ENCODE measurements at regions of chr19 and their contacts with region 1.

Region 1: DNA sequence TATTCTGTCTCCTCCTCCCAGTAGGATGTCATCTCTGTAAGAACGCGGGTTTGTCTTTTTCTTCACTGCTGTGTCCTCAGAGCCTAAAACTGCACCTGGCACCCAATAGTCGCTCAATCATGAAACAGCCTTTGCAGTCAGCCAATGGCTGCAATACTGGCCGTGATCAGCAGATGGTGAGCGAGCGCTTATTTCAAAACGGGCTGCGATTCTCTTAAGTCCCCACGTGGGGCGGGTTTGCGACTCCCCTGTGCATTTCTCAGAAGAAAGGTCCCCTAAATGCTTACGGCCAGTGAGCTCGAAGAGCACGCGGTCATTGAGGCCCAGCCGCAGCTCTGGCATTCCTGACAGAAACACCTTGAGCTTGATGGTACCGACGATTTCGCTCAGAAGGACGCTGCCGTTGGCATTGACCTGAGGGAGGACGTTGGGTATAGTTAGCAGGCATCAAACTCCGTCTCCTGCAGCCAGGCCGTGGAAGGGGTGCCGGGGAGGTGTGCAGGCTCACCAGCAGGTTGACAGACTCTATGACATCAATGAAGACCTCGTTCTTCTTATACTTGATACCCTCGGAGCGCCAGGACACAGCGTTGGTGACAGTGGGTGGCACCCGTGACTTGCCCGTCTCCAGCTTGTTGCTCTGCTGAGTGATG is 6.0 kb downstream of the AP1M2 start:
- DNase-seq: peak; percentile 93
- H3K4me3 Mint-ChIP-seq: no peak overlapping the region
- H3K27ac Mint-ChIP-seq: no peak overlapping the region
- H3K4me1 Mint-ChIP-seq: peaks cover 21% of the 10 kb centered on the region
- H3K27me3 Mint-ChIP-seq: peaks cover 1% of the 10 kb centered on the region

Region 2: DNA sequence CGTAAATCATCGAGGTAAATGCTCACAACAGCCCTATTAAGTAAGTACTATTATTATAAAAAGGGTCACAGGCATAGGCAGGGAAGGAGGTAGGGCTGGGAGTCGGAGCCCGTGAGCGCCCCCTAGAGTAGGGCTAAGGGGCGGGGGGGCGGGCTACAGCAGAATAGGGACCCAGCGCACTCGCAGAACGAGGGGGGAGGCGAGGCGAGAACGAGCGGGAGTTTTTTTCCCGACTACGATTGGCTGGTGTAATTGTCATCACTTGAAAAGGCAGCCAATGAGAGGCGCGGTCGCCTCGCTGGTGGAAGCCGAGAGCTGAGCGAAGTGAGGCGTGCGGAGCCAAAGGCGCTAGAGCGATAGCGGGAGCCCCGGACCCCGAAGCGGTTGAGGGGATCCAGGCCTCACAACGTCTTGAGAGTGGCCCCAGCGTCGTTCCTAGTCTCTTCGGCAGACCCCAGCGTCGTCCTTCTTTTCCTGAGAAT is 102.2 kb before region 1 on chr19:
- CTCF ChIA-PET with region 1: interaction called, 11 read pairs
- POLR2A ChIA-PET with region 1: no interaction called
- DNase-seq: peak; percentile 88
- H3K4me3 Mint-ChIP-seq: no peak overlapping the region
- H3K27ac Mint-ChIP-seq: no peak overlapping the region
- H3K4me1 Mint-ChIP-seq: peaks cover 24% of the 10 kb centered on the region
- H3K27me3 Mint-ChIP-seq: no peaks in the 10 kb centered on the region

Region 3: DNA sequence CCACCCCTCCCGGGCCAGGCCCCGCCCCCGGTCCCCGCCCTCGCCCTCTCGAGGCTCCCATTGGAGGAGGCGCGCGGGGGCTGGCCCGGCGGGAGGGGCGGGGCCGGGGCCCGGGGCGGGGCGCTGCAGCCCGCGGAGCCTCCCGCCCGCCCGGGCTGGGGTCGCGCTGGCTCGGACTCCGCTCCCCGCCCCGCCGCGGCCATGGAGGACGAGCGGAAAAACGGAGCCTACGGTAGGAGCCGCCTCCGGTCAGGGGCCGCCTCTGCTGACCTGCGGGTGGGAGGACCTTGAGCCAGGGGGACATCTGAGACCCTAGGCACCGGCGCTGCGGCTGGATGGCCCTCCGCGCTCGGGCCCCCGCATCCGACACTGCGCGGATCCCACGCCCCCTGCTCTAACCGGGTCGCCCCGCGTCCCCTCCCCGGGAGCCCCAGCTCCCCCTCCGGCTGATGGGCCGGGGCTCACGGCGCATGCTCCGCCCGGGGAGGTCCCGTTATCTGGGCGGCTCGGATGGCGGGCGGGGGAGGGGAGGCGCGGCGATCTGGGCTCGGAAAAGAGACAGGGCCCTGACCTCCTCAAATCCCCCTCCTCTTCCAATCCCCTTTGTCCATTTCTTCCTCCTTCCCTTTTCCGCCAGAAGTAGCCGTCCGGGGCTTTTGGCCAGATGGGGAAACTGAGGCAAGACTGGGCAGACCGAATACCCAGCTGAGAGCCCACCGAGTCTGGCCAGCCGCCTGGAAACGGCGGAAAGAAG is 21.4 kb after region 1 on chr19:
- CTCF ChIA-PET with region 1: interaction called, 39 read pairs
- POLR2A ChIA-PET with region 1: interaction called, 20 read pairs
- DNase-seq: peak; percentile 91
- H3K4me3 Mint-ChIP-seq: peak overlapping the region; percentile 95
- H3K27ac Mint-ChIP-seq: peak overlapping the region; percentile 99
- H3K4me1 Mint-ChIP-seq: peaks cover 25% of the 10 kb centered on the region
- H3K27me3 Mint-ChIP-seq: peaks cover 3% of the 10 kb centered on the region

Region 4: DNA sequence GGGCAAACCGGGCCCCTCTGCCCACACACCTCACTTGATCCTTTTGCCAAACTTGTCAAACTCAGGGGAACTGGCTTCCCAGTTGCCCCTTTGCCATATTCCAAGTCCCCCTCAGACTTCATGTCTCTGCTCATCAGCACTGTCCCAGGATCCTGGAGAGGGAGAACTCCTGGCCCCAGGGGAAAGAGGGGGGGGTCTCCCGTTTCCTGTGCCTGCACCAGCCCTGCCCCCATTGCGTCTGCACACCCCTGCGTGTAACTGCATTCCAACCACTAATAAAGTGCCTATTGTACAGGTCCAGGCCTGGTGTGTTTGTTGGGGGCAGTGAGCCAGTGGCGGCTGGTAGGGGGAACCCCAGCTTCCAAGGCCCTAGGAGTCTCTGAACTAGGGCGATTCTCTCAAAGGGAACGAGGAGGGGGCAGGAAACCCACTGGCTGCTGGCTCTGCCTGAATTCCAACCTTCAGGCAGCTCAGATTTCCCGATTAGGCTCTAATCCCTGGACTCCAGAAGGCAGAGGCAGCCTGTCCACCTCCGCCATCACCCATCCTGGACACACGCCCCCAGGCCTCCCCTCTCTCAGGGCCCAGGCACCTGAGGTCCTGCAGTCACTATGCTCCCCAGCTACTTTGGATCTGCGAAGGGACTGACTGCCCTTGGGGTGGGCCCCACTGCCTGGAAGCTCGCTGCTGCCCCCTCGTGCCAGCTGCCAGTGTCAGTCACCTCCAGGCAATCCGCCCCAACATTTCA is 63.3 kb after region 1 on chr19:
- CTCF ChIA-PET with region 1: interaction called, 230 read pairs
- POLR2A ChIA-PET with region 1: interaction called, 16 read pairs
- DNase-seq: peak; percentile 83
- H3K4me3 Mint-ChIP-seq: no peak overlapping the region
- H3K27ac Mint-ChIP-seq: no peak overlapping the region
- H3K4me1 Mint-ChIP-seq: peaks cover 3% of the 10 kb centered on the region
- H3K27me3 Mint-ChIP-seq: no peaks in the 10 kb centered on the region

Region 5: DNA sequence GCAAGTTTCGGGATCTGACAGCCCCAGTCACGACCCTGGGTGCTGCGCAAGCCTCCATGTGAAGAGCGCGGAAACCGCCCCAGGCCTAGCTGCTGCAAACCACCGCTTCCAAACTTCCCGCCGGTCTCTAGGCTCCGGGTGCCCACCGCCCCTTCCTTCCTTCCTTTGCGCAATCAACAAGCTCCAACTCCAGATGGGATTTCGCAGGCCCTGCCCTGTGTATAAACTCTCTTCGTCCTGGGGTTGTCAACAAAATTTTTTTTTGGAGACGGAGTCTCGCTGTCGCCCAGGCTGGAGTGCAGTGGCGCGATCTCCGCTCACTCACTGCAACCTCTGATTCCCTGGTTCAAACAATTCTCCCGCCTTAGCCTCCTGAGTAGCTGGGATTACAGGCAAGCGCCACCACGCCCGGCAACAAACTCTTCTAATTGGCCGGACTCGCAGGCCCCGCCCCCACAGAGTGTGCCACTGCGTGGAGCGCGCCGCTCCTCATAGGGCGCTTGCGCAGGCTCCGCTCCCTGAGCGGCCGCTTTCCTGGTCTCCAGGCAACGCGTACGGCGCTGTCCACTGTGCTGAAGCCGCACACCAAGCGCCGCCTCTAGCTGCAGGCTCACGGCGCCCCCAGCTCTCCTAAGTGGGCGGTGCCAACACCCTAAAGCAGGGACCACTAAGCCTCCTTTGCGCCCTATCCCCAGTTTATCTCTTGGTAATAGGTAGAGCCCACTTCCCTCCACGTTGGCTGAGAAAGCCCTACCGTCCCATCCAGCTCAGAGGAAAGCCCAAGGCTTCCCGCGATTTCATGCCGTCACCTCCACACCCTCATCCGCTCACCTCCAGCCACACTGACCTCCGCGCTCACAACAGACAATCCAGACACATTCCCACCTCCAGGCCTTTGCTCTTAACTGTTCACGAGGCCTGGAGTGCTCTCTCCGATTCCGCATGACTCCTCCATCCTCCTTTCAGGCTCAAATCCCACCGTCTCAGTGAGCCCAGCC is 114.6 kb after region 1 on chr19:
- CTCF ChIA-PET with region 1: interaction called, 137 read pairs
- POLR2A ChIA-PET with region 1: interaction called, 5 read pairs
- DNase-seq: peak; percentile 93
- H3K4me3 Mint-ChIP-seq: peak overlapping the region; percentile 53
- H3K27ac Mint-ChIP-seq: no peak overlapping the region
- H3K4me1 Mint-ChIP-seq: peaks cover 18% of the 10 kb centered on the region
- H3K27me3 Mint-ChIP-seq: peaks cover 19% of the 10 kb centered on the region